GM13977 (cell line): ENCODE measurements at regions of chr10 and their contacts with region 1.

Region 1: DNA sequence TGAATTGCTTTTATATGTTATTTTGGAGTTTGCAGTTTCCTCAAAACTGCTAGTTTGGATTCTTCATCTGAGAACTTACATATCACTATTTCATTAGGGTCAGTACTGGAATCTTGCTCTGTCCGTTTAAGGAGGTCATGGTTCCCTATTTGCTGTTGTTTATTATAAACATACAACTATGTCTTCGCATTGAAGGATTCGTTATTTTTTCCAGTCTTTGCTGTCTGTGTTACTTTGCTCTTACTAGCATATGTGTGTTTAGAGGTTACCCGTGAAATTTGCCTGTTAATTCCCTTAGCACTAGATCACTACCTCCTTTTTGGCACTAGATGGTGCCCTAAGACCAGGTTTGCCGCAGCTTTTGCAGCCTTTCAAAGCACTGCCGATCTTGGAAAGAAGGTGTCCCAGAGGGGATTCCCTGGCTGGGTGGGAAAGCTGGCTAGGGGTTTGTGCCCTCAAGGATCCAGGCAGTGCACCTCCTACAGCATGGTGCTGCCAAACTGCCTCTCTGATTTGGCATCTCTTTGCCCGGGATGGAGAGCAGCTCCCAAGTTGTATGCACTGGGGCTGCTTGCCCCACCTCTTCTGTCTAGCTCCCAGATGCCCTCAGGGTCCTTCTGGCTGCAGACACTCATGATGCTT is 103.1 kb upstream of the APBB1IP start:
- DNase-seq: peak; percentile 59
- CTCF ChIP-seq: peak; percentile 86

Region 2: DNA sequence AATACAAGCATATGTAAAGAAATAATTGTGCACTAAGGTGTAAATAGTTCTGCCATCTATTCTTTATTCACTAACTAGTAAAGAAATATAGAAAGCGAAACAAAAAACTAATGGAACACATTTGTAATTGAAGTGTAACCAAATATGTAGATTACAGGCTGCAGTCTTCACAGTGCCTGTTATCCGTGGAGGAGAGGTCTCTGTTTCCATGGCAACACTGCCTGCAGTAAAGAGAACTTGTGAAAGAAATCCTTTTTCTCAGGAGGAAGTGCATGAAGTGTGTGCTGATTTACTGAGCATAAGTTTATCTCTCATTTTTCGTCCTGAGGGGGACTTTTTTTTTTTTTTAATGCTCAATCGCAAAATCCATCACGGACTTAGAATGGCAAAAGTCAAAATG is 205.5 kb after region 1 on chr10:
- in situ Hi-C with region 1: loop called (anchors 25 kb)
- DNase-seq: peak; percentile 34
- CTCF ChIP-seq: no peak

Region 3: GRCh38 chr10:26697163-26697921 is 362.3 kb after region 1 on chr10 and contains the start of gene PDSS1:
- in situ Hi-C with region 1: loop called (anchors 25 kb)
- DNase-seq: peak; percentile 92
- CTCF ChIP-seq: no peak